T-cell (primary cell): ENCODE measurements at regions of chr5 and their contacts with region 1.

Region 1: DNA sequence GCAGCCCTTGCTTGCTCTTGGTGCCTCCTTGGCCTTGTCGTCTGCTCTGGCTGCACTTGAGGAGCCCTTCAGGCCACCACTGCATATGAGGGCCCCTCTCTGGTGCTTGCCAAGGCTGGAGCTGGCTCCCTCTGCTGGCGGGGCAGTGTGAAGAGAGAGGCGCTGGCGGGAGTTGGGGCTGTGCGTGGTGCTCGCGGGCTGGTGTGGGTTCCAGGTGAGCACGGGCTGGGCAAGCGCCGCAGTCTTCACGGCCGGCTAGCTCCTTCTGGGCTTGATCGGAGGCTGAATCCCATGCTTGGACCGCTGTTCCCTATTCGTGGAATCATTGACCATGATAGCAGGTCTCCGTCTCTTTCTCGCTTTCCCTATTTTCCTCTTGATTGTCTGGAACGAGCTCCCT is 56.5 kb downstream of the XRCC4 start:
- DNase-seq: no peak
- ATAC-seq: no peak
- H3K4me3 ChIP-seq: no peak overlapping the region
- H3K4me3 Mint-ChIP-seq: no peak overlapping the region
- H3K27ac ChIP-seq: no peak overlapping the region
- H3K27ac Mint-ChIP-seq: no peak overlapping the region
- H3K4me1 ChIP-seq: no peaks in the 10 kb centered on the region
- H3K4me1 Mint-ChIP-seq: no peaks in the 10 kb centered on the region
- H3K27me3 ChIP-seq: peaks cover 0 to 4% of the 10 kb centered on the region in 2 experiments
- H3K27me3 Mint-ChIP-seq: no peaks in the 10 kb centered on the region

Region 2: DNA sequence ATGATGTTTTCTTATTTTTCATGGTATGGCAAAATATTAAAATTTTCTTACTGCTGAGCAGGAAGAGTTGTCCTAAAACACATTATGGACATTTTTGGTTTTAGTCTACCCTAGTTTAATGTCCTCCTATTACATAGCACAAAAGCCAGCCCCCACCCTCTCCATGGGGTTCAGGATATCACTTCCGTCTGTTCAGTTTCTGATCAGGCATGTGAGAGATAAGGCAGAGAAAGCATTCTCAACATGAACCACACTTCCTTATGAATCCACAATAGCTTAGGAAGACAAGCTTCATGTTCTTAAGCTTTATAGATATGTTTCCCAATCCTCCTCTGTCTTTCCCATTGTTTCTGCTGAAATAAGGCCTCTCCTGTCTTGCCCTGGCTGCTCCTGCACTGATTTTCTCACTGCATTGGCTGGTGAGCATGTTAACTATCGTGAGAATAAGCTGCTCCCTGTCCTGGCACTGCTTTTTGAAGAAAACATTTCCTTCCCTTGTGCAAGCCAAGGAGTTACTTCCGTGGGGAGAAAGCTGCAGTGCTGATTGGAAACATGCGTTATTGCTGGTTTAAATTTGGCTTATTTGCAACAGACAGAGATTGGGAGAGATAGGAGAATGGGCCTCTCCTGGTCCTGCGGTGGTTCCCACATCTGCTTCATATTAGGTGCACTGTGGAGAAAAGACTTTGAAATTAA is 595.3 kb before region 1 on chr5:
- CTCF ChIA-PET with region 1: interaction called in 1 of 2 experiments, 12 read pairs
- POLR2A ChIA-PET with region 1: no interaction called
- DNase-seq: no peak
- ATAC-seq: no peak
- H3K4me3 ChIP-seq: no peak overlapping the region
- H3K4me3 Mint-ChIP-seq: no peak overlapping the region
- H3K27ac ChIP-seq: no peak overlapping the region
- H3K27ac Mint-ChIP-seq: no peak overlapping the region
- H3K4me1 ChIP-seq: no peaks in the 10 kb centered on the region
- H3K4me1 Mint-ChIP-seq: no peaks in the 10 kb centered on the region
- H3K27me3 ChIP-seq: no peaks in the 10 kb centered on the region
- H3K27me3 Mint-ChIP-seq: peaks cover 3 to 9% of the 10 kb centered on the region in 2 donors

Region 3: GRCh38 chr5:82820961-82821845 is 312.6 kb before region 1 on chr5:
- CTCF ChIA-PET with region 1: no interaction called
- POLR2A ChIA-PET with region 1: no interaction called
- DNase-seq: no peak
- ATAC-seq: peak in 1 of 4 experiments; percentile 49
- H3K4me3 ChIP-seq: no peak overlapping the region
- H3K4me3 Mint-ChIP-seq: no peak overlapping the region
- H3K27ac ChIP-seq: no peak overlapping the region
- H3K27ac Mint-ChIP-seq: no peak overlapping the region
- H3K4me1 ChIP-seq: peaks cover 0 to 3% of the 10 kb centered on the region in 2 experiments
- H3K4me1 Mint-ChIP-seq: peaks cover 0 to 9% (median 7%) of the 10 kb centered on the region in 3 donors
- H3K27me3 ChIP-seq: no peaks in the 10 kb centered on the region
- H3K27me3 Mint-ChIP-seq: no peaks in the 10 kb centered on the region

Region 4: DNA sequence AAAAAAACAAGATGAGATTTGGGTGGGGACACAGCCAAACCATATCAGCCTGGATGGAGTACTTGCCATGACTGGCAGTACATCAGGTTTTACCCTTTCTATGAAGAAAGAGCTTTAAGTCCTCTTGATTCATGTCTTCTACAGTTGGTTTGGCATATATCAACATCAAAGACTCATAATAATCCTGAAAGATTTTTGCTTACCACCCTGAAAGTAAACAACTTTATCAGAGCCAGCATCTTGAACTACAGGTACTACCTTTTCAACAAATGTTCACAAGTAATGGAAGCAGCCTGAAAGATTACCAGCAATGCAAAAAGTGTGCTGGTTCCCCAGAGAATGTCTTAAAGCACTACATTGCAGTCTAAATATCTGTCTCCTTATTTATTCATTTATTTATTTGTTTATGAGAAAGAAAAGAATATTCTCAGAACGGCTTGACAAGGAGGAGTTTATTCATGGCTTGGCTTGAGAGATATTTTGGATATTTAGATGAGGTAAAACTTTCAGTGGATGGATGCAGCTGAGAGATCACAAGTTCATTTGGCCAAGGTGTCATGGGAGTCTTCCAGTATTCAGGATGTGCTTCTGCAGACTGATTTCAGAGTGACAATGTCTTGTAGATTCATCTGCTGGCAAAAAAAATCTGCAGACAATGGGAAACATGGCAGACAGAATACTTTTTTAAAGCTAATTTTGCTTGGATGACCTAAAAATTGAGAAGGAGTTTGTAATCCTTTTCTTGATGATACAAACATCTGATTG is 18.2 kb before region 1 on chr5:
- CTCF ChIA-PET with region 1: no interaction called
- POLR2A ChIA-PET with region 1: no interaction called
- DNase-seq: no peak
- ATAC-seq: no peak
- H3K4me3 ChIP-seq: no peak overlapping the region
- H3K4me3 Mint-ChIP-seq: no peak overlapping the region
- H3K27ac ChIP-seq: no peak overlapping the region
- H3K27ac Mint-ChIP-seq: no peak overlapping the region
- H3K4me1 ChIP-seq: no peaks in the 10 kb centered on the region
- H3K4me1 Mint-ChIP-seq: no peaks in the 10 kb centered on the region
- H3K27me3 ChIP-seq: no peaks in the 10 kb centered on the region
- H3K27me3 Mint-ChIP-seq: no peaks in the 10 kb centered on the region